ENCODE measurements at regions of chr12 and their contacts with region 1.

Region 1: DNA sequence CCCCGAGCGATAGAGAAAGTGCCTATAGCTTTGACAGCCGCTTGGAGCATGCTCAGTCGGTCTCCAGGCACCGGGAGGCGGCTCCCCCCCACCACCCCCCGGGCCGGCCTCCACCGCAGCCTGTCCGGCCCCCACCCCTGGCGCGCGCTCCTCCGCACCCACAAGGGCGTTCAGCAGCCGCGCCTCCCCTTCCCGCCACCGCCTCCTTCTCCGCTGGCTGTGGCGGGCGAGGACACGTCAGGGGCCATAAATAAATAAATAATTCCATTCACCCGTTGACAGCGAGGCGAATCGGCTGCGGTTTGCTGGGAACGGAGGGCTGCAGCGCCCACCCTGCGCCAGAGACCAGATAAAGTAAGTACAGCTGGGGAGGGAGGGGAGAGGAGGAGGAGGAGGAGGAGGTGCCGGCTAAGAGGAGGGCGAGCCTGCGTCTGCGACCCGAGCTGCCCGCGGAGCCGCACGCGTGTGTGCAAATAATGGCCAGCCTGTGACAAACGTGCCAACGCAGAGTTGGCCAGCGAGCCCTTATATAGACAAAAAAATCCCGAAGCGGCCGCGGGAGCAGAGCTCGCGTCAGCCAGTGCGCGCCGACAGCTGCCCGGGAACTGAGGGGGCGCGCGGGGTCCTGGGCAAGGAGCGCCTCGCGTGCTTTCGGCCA is at the start of gene SLC16A7:
- DNase-seq: peak; percentile 89
- ATAC-seq: peak; percentile 60
- H3K4me3 ChIP-seq: peak within 1 kb of the TSS; percentile 87 to 95 (median 87)
- H3K4me3 Mint-ChIP-seq: peak within 1 kb of the TSS; percentile 94
- H3K27ac ChIP-seq: peak within 1 kb of the TSS; percentile 89 to 92
- H3K27ac Mint-ChIP-seq: peak within 1 kb of the TSS; percentile 96
- H3K4me1 ChIP-seq: peaks cover 9 to 16% of the 10 kb centered on the region in 2 donors
- H3K4me1 Mint-ChIP-seq: peaks cover 38% of the 10 kb centered on the region
- H3K27me3 ChIP-seq: no peaks in the 10 kb centered on the region
- H3K27me3 Mint-ChIP-seq: no peaks in the 10 kb centered on the region
- CTCF ChIP-seq: no peak
- total RNA-seq, gene SLC16A7: 32.7 and 32.8 TPM in 2 replicates

Region 2: GRCh38 chr12:59484575-59484974 is 111.4 kb before region 1 on chr12:
- CTCF ChIA-PET with region 1: no interaction called
- POLR2A ChIA-PET with region 1: no interaction called
- intact Hi-C with region 1: loop called (anchors 5 kb)
- DNase-seq: peak; percentile 37
- ATAC-seq: peak; percentile 51
- H3K4me3 ChIP-seq: no peak overlapping the region
- H3K4me3 Mint-ChIP-seq: no peak overlapping the region
- H3K27ac ChIP-seq: peak overlapping the region in 1 of 2 donors; percentile 13
- H3K27ac Mint-ChIP-seq: no peak overlapping the region
- H3K4me1 ChIP-seq: peaks cover 11 to 17% of the 10 kb centered on the region in 2 donors
- H3K4me1 Mint-ChIP-seq: peaks cover 25% of the 10 kb centered on the region
- H3K27me3 ChIP-seq: no peaks in the 10 kb centered on the region
- H3K27me3 Mint-ChIP-seq: no peaks in the 10 kb centered on the region
- CTCF ChIP-seq: no peak

Region 3: GRCh38 chr12:59620326-59620725 is 24.3 kb after region 1 on chr12:
- CTCF ChIA-PET with region 1: no interaction called
- POLR2A ChIA-PET with region 1: no interaction called
- intact Hi-C with region 1: loop called (anchors 2 kb)
- DNase-seq: peak; percentile 51
- ATAC-seq: peak; percentile 72
- H3K4me3 ChIP-seq: peak overlapping the region in 2 of 5 experiments; percentile 15 to 20
- H3K4me3 Mint-ChIP-seq: peak overlapping the region; percentile 69
- H3K27ac ChIP-seq: peak overlapping the region in 1 of 2 donors; percentile 71
- H3K27ac Mint-ChIP-seq: peak overlapping the region; percentile 54
- H3K4me1 ChIP-seq: peaks cover 18 to 23% of the 10 kb centered on the region in 2 donors
- H3K4me1 Mint-ChIP-seq: peaks cover 30% of the 10 kb centered on the region
- H3K27me3 ChIP-seq: no peaks in the 10 kb centered on the region
- H3K27me3 Mint-ChIP-seq: no peaks in the 10 kb centered on the region
- CTCF ChIP-seq: no peak

Region 4: GRCh38 chr12:59808317-59808910 is 212.4 kb after region 1 on chr12:
- CTCF ChIA-PET with region 1: interaction called, 4 read pairs
- POLR2A ChIA-PET with region 1: no interaction called
- intact Hi-C with region 1: loop called (anchors 1 kb)
- DNase-seq: peak; percentile 49
- ATAC-seq: peak; percentile 67
- H3K4me3 ChIP-seq: no peak overlapping the region
- H3K4me3 Mint-ChIP-seq: no peak overlapping the region
- H3K27ac ChIP-seq: no peak overlapping the region
- H3K27ac Mint-ChIP-seq: no peak overlapping the region
- H3K4me1 ChIP-seq: no peaks in the 10 kb centered on the region
- H3K4me1 Mint-ChIP-seq: peaks cover 5% of the 10 kb centered on the region
- H3K27me3 ChIP-seq: no peaks in the 10 kb centered on the region
- H3K27me3 Mint-ChIP-seq: no peaks in the 10 kb centered on the region
- CTCF ChIP-seq: peak; percentile 94

Measured in B cell (primary cell).